Calu3 (cell line): ENCODE measurements at regions of chr1 and their contacts with region 1.

Region 1: DNA sequence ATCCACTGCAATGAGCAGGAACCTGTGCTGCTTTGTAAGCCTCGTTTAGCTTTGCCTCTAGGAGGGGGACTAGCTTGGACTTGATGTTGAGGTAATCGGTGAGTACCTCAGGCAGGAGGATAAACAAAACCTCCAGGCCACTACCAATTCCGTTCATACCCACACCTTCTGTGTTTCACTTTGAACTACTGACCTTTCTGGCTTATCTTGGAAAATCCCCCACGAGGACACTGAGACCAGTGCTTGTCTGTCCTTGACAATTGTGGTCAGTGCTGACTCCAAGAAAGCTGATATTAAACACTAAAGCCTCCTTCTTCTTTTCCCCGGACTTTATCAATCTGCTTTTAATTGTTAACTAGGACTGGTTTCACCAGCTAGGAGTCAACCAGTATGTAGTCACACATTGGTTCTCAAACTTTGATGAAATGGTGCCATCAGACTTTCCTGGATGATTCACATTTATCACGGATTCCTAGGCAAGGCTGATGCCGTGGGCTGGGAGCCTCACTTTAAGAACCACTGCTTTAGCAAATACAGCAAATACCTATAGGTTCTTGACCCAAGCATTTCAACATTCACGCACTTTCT is 52.7 kb downstream of the TGFB2 start:
- DNase-seq: peak; percentile 82
- H3K4me3 Mint-ChIP-seq: peak overlapping the region; percentile 26
- H3K27ac Mint-ChIP-seq: peak overlapping the region; percentile 71
- H3K4me1 Mint-ChIP-seq: peaks cover 40% of the 10 kb centered on the region
- H3K27me3 Mint-ChIP-seq: no peaks in the 10 kb centered on the region
- CTCF ChIP-seq: no peak

Region 2: GRCh38 chr1:218377143-218377660 is 20.6 kb before region 1 on chr1:
- CTCF ChIA-PET with region 1: interaction called, 17 read pairs
- intact Hi-C with region 1: loop called (anchors 1 kb)
- DNase-seq: peak; percentile 83
- H3K4me3 Mint-ChIP-seq: peak overlapping the region; percentile 41
- H3K27ac Mint-ChIP-seq: peak overlapping the region; percentile 83
- H3K4me1 Mint-ChIP-seq: peaks cover 83% of the 10 kb centered on the region
- H3K27me3 Mint-ChIP-seq: no peaks in the 10 kb centered on the region
- CTCF ChIP-seq: no peak

Region 3: GRCh38 chr1:218426343-218426657 is 28.5 kb after region 1 on chr1:
- CTCF ChIA-PET with region 1: no interaction called
- intact Hi-C with region 1: loop called (anchors 2 kb)
- DNase-seq: peak; percentile 78
- H3K4me3 Mint-ChIP-seq: no peak overlapping the region
- H3K27ac Mint-ChIP-seq: peak overlapping the region; percentile 91
- H3K4me1 Mint-ChIP-seq: peaks cover 37% of the 10 kb centered on the region
- H3K27me3 Mint-ChIP-seq: no peaks in the 10 kb centered on the region
- CTCF ChIP-seq: no peak